ENCODE measurements at regions of chr13 and their contacts with region 1.

Region 1: DNA sequence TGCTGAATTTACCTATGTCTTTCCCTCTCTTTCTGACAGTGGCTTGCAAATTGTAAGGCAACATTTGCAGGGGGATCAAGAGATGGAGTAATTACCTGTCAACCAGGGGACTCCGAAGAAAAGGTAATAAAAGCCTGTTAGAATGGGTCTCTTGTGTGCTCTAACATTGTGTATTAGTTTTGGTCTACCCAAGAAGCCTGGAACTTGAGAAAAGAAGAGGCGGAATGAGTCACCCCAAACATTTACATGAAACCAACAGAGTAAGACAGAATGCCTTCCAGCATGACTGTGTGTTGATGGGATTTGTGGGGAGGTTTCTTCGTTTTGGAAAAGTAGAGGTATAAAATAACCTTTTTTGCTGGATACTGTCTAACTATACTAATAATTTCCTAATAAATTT is 36.7 kb downstream of the ZAR1L start:
- DNase-seq: no peak
- ATAC-seq: no peak
- H3K4me3 ChIP-seq: no peak overlapping the region
- H3K4me3 Mint-ChIP-seq: no peak overlapping the region
- H3K27ac ChIP-seq: no peak overlapping the region
- H3K27ac Mint-ChIP-seq: no peak overlapping the region
- H3K4me1 ChIP-seq: no peaks in the 10 kb centered on the region
- H3K4me1 Mint-ChIP-seq: no peaks in the 10 kb centered on the region
- H3K27me3 ChIP-seq: no peaks in the 10 kb centered on the region
- H3K27me3 Mint-ChIP-seq: no peaks in the 10 kb centered on the region

Region 2: GRCh38 chr13:32415019-32415418 is 136.6 kb after region 1 on chr13:
- CTCF ChIA-PET with region 1: no interaction called
- POLR2A ChIA-PET with region 1: interaction called in 1 of 2 experiments, 10 read pairs
- DNase-seq: peak in 17 of 35 experiments; percentile 8 to 46 (median 16)
- ATAC-seq: peak in 1 of 4 experiments; percentile 67
- H3K4me3 ChIP-seq: no peak overlapping the region
- H3K4me3 Mint-ChIP-seq: no peak overlapping the region
- H3K27ac ChIP-seq: no peak overlapping the region
- H3K27ac Mint-ChIP-seq: no peak overlapping the region
- H3K4me1 ChIP-seq: no peaks in the 10 kb centered on the region
- H3K4me1 Mint-ChIP-seq: peaks cover 15 to 21% (median 18%) of the 10 kb centered on the region in 3 donors
- H3K27me3 ChIP-seq: no peaks in the 10 kb centered on the region
- H3K27me3 Mint-ChIP-seq: no peaks in the 10 kb centered on the region

Measured in T-cell (primary cell).